CD4-positive, alpha-beta memory T cell (primary cell): ENCODE measurements at regions of chr3 and their contacts with region 1.

Region 1: DNA sequence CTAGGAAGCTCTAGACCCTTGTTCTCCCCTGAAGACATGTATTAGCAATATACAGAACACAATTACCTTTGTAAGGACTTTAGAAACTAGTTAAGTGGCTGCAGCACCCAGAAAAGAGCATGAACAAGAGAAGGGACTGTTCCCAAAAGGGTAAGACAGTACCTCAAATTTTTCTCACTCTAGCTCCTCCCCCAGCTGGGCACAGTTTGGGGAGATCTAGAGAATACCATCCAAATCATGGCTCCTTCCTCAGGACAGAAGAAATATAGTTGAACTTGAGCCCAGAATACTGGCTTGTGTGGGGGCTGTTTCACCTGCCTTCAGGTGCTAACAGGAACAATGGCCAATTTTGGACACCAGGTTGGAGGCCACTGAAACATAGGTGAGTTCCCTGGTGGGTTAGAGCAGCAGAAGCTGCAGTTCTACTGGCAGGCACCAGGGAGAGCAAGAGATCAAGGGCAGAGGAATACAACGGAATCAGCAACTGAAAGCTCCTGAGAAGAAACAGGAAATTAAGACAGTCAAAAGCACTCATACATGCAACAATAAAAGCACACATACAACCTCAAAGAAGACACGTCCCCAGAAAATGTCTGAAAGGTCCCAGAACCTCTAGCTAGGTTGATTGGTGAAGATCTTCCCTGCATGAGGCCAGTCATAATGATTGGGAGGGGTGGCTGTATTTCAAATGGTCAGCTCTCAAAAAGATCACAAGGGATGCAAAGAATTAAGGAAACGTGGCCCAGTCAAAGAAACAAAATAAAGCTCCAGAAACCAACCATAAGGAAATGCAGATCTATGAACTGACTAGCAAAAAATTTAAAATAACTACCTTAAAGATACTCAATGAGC is 104.9 kb upstream of the ASB14 start:
- DNase-seq: peak; percentile 56 to 72 (median 64)
- H3K4me3 ChIP-seq: no peak overlapping the region
- H3K4me3 Mint-ChIP-seq: peak overlapping the region in 7 of 8 donors; percentile 0 to 71 (median 31)
- H3K27ac ChIP-seq: no peak overlapping the region
- H3K27ac Mint-ChIP-seq: peak overlapping the region in 6 of 7 donors; percentile 33 to 72 (median 46)
- H3K4me1 ChIP-seq: peaks cover 7% of the 10 kb centered on the region
- H3K4me1 Mint-ChIP-seq: peaks cover 6 to 12% (median 9%) of the 10 kb centered on the region in 4 donors
- H3K27me3 ChIP-seq: no peaks in the 10 kb centered on the region
- H3K27me3 Mint-ChIP-seq: peaks cover 5 to 8% of the 10 kb centered on the region in 2 donors

Region 2: GRCh38 chr3:57555738-57556458 is 158.5 kb after region 1 on chr3 and contains the start of gene PDE12:
- CTCF ChIA-PET with region 1: interaction called, 3 read pairs
- POLR2A ChIA-PET with region 1: interaction called, 11 read pairs
- intact Hi-C with region 1: loop called (anchors 2 kb)
- DNase-seq: peak; percentile 82 to 87 (median 83)
- H3K4me3 ChIP-seq: peak within 1 kb of the TSS; percentile 85 to 89
- H3K4me3 Mint-ChIP-seq: peak within 1 kb of the TSS; percentile 92 to 100 (median 96)
- H3K27ac ChIP-seq: peak within 1 kb of the TSS; percentile 89
- H3K27ac Mint-ChIP-seq: peak within 1 kb of the TSS; percentile 97 to 100 (median 99)
- H3K4me1 ChIP-seq: peaks cover 43% of the 10 kb centered on the region
- H3K4me1 Mint-ChIP-seq: peaks cover 24 to 57% (median 36%) of the 10 kb centered on the region in 4 donors
- H3K27me3 ChIP-seq: no peaks in the 10 kb centered on the region
- H3K27me3 Mint-ChIP-seq: no peaks in the 10 kb centered on the region
- total RNA-seq, gene PDE12: 23.8 to 24.9 TPM

Region 3: GRCh38 chr3:57755668-57756527 is 358.5 kb after region 1 on chr3 and contains the start of gene SLMAP:
- CTCF ChIA-PET with region 1: interaction called, 4 read pairs
- POLR2A ChIA-PET with region 1: interaction called, 7 read pairs
- intact Hi-C with region 1: loop called (anchors 1 kb)
- DNase-seq: peak; percentile 94 to 98 (median 95)
- H3K4me3 ChIP-seq: peak within 1 kb of the TSS; percentile 40 to 81
- H3K4me3 Mint-ChIP-seq: peak within 1 kb of the TSS; percentile 96 to 99 (median 98)
- H3K27ac ChIP-seq: peak within 1 kb of the TSS; percentile 77
- H3K27ac Mint-ChIP-seq: peak within 1 kb of the TSS; percentile 86 to 98 (median 96)
- H3K4me1 ChIP-seq: peaks cover 39% of the 10 kb centered on the region
- H3K4me1 Mint-ChIP-seq: peaks cover 19 to 49% (median 35%) of the 10 kb centered on the region in 4 donors
- H3K27me3 ChIP-seq: no peaks in the 10 kb centered on the region
- H3K27me3 Mint-ChIP-seq: no peaks in the 10 kb centered on the region
- total RNA-seq, gene SLMAP: 58.6 to 69.0 TPM

Region 4: GRCh38 chr3:57852896-57853295 is 455.5 kb after region 1 on chr3:
- CTCF ChIA-PET with region 1: interaction called, 24 read pairs
- POLR2A ChIA-PET with region 1: interaction called, 3 read pairs
- intact Hi-C with region 1: loop called (anchors 2 kb)
- DNase-seq: peak in 1 of 5 donors; percentile 4
- H3K4me3 ChIP-seq: no peak overlapping the region
- H3K4me3 Mint-ChIP-seq: no peak overlapping the region
- H3K27ac ChIP-seq: no peak overlapping the region
- H3K27ac Mint-ChIP-seq: no peak overlapping the region
- H3K4me1 ChIP-seq: no peaks in the 10 kb centered on the region
- H3K4me1 Mint-ChIP-seq: no peaks in the 10 kb centered on the region
- H3K27me3 ChIP-seq: no peaks in the 10 kb centered on the region
- H3K27me3 Mint-ChIP-seq: no peaks in the 10 kb centered on the region

Region 5: DNA sequence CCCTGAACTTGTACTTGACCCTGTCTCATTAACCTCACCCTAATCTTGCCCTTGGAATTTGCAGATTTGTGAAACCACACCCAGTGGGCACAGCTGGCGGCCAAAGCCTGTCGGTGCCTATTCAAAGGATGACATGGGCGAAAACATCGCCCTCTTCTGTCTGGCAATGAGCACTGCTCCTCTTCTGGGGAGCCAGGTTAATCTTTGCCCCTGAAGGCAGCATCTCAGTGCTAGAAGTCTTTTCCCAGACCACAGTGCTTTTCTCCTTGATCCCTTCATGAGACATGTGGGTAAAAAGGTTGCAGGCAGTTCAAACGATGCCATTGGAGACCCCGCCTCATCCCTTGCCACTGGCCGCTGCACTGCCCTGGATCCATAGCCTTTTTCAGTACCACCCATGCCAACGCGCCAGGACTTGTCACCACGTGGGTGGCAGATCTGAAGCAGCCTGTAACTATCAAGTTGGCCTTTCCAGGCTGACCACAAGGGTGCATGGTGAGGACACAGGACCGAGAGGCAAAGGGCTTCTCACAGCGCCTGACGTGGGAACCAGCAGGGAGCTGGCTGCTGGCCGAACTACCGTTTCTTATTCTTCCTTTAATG is 819.9 kb after region 1 on chr3:
- CTCF ChIA-PET with region 1: no interaction called
- POLR2A ChIA-PET with region 1: no interaction called
- intact Hi-C with region 1: loop called (anchors 2 kb)
- DNase-seq: peak; percentile 47 to 56 (median 50)
- H3K4me3 ChIP-seq: no peak overlapping the region
- H3K4me3 Mint-ChIP-seq: peak overlapping the region in 1 of 8 donors; percentile 61
- H3K27ac ChIP-seq: no peak overlapping the region
- H3K27ac Mint-ChIP-seq: no peak overlapping the region
- H3K4me1 ChIP-seq: peaks cover 6% of the 10 kb centered on the region
- H3K4me1 Mint-ChIP-seq: peaks cover 3 to 9% (median 5%) of the 10 kb centered on the region in 4 donors
- H3K27me3 ChIP-seq: no peaks in the 10 kb centered on the region
- H3K27me3 Mint-ChIP-seq: peaks cover 0 to 2% of the 10 kb centered on the region in 2 donors